Activated T-helper 2 cell treated with anti-CD3 and anti-CD28 coated beads, Interferon-gamma antibody, Interleukin-2, Interleukin-4, amounts not matched to agents 10 μg/mL and 5 μg/mL and 100 μg/mL, durations not matched to agents 14 hours and 24 hours and 36 hours (primary cell): ENCODE measurements at regions of chr17 and their contacts with region 1.

Region 1: GRCh38 chr17:82153745-82154375 is 55.8 kb upstream of the FASN start:
- DNase-seq: peak; percentile 76
- H3K4me3 Mint-ChIP-seq: no peak overlapping the region
- H3K27ac Mint-ChIP-seq: no peak overlapping the region
- H3K4me1 Mint-ChIP-seq: peaks cover 5% of the 10 kb centered on the region
- H3K27me3 Mint-ChIP-seq: no peaks in the 10 kb centered on the region

Region 2: DNA sequence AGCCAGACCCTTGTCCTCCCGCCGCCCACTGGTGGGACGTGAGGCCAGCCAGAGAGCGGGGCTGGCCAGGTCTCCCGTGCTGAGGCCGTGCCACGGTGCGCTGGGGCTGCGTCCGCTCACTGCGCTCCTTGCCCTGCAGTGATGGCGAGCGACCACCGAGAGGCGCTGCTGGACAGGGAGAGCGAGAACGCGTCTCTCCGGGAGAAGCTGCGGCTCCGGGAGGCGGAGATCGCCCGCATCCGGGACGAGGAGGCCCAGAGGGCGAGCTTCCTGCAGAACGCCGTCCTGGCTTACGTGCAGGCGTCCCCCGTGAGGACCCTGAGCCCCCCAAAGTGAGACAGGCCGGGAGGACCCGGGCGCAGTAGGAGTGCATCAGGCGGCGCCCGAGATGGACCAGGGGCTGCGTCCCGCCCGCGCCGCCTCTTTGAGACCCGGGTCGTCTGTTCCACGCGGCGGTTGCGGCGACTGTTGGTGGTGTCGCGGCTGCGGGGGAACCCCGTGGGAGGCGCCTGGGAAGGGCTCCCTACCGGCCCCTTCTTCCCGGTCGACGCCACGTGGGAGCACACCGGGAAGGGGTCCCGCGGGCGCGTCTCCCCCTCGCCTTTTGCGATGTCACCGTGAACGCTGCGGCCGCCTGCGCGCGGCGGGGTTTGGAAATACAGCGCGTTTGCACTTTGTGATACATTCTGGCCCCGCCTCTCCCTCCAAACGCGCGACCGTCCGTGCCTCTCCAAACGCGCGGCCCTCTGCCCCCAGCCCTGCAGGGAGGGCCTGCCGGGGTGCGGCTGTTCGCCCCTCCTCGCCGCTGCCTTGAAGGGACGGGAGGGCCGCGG is 123.2 kb before region 1 on chr17:
- intact Hi-C with region 1: loop called (anchors 1 kb)
- DNase-seq: peak; percentile 81
- H3K4me3 Mint-ChIP-seq: peak overlapping the region; percentile 86
- H3K27ac Mint-ChIP-seq: peak overlapping the region; percentile 84
- H3K4me1 Mint-ChIP-seq: peaks cover 9% of the 10 kb centered on the region
- H3K27me3 Mint-ChIP-seq: no peaks in the 10 kb centered on the region

Region 3: DNA sequence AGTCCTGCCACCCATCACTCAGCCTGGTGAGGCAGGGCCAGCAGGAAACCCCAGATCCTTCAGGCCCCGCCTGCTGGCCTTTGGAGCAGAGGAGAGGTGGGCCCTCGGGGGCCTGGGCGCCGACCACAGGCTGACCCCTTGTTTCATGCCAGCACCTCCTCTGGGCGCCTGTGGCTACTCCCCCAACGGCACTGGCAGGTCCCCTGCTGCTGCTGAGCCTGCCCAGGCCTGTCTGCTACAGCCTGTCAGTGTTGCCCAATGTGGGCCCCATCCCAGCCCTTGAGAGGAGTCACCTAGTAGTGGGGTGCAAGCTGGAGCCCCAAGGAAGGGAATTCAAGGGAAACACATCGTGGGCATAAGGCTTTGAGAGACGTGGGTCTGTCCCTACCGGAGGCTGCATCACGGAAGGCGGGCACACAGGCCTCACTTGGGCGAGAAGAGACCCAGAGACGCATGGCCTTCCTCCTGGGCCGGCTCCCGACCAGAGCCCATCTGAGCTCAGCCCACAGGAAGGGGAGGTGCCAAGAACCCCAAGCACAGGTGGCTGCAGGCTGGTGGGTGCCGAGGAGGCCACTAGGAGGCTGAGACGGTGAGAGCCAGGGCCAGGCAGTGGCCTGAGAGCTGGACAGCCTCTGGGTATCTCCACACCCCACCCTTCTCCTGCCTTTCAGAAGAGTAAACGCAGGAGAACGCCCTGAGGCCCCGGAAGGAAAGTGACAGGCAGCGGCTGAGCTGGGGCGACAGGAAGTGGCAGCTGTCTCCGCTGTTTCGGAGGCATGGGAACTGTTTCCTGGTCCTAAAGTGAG is 47.8 kb before region 1 on chr17:
- intact Hi-C with region 1: loop called (anchors 5 kb)
- DNase-seq: peak; percentile 60
- H3K4me3 Mint-ChIP-seq: peak overlapping the region; percentile 83
- H3K27ac Mint-ChIP-seq: peak overlapping the region; percentile 93
- H3K4me1 Mint-ChIP-seq: peaks cover 13% of the 10 kb centered on the region
- H3K27me3 Mint-ChIP-seq: no peaks in the 10 kb centered on the region